Activated CD8-positive, alpha-beta T cell treated with anti-CD3 and anti-CD28 coated beads, Interleukin-2, amount 10 ng/mL, durations not matched to agents 7 days and 5 days (primary cell): ENCODE measurements at regions of chr2 and their contacts with region 1.

Region 1: GRCh38 chr2:97697252-97698235 is 15.8 kb upstream of the ZAP70 start:
- DNase-seq: peak; percentile 96
- ATAC-seq: peak; percentile 93
- H3K4me3 Mint-ChIP-seq: peak overlapping the region; percentile 10
- H3K27ac Mint-ChIP-seq: no peak overlapping the region
- H3K4me1 Mint-ChIP-seq: peaks cover 13% of the 10 kb centered on the region
- H3K27me3 Mint-ChIP-seq: peaks cover 2% of the 10 kb centered on the region

Region 2: GRCh38 chr2:97645695-97646629 is 51.6 kb before region 1 on chr2 and contains the start of gene COX5B:
- CTCF ChIA-PET with region 1: interaction called, 24 read pairs
- POLR2A ChIA-PET with region 1: interaction called, 17 read pairs
- DNase-seq: peak; percentile 99
- ATAC-seq: peak; percentile 98
- H3K4me3 Mint-ChIP-seq: peak within 1 kb of the TSS; percentile 89
- H3K27ac Mint-ChIP-seq: peak within 1 kb of the TSS; percentile 93
- H3K4me1 Mint-ChIP-seq: peaks cover 17% of the 10 kb centered on the region
- H3K27me3 Mint-ChIP-seq: peaks cover 2% of the 10 kb centered on the region
- total RNA-seq, gene COX5B: 215 to 216 TPM

Region 3: DNA sequence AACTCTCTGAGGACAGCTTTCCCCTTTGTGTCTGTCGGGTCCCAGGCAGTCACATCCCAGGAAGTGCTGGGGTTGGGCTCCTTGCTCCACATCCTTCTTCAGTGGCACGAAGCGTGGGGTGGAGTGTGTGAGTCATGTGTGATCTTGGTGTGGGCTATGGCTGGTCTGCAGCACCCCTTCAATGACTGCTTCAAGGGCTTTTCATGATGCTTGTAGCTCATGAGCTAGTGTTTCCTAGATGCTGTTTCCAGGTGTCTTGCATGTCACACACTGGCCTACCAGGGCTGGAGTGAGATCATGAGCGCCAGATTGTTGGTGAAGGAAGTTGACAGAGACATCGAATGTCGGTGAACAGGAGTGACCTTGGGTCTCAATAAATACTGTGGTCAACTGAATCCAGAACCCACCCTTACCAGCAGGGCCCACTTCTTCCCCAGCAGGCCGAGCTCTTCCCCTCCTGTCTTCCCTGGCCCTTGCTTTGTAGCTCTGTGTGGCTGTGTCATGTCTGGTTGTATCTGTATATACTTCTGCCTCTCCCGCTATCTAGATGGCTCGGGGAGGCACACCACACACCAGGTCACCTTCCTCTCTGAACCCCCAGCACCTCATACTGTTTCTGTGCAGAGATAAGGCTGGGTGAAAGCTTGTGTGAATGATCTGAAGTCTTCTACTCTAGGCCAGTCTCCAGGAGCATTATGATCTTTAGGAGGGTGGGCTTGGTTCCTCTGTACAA is 24.2 kb before region 1 on chr2:
- CTCF ChIA-PET with region 1: interaction called, 17 read pairs
- POLR2A ChIA-PET with region 1: no interaction called
- DNase-seq: peak; percentile 37
- ATAC-seq: peak; percentile 51
- H3K4me3 Mint-ChIP-seq: no peak overlapping the region
- H3K27ac Mint-ChIP-seq: peak overlapping the region; percentile 27
- H3K4me1 Mint-ChIP-seq: peaks cover 28% of the 10 kb centered on the region
- H3K27me3 Mint-ChIP-seq: peaks cover under 1% of the 10 kb centered on the region

Region 4: GRCh38 chr2:97740590-97741182 is 43.1 kb after region 1 on chr2:
- CTCF ChIA-PET with region 1: interaction called, 50 read pairs
- POLR2A ChIA-PET with region 1: no interaction called
- DNase-seq: peak; percentile 50
- ATAC-seq: no peak
- H3K4me3 Mint-ChIP-seq: no peak overlapping the region
- H3K27ac Mint-ChIP-seq: peak overlapping the region; percentile 78
- H3K4me1 Mint-ChIP-seq: peaks cover 63% of the 10 kb centered on the region
- H3K27me3 Mint-ChIP-seq: no peaks in the 10 kb centered on the region

Region 5: GRCh38 chr2:97763176-97763845 is 65.8 kb after region 1 on chr2:
- CTCF ChIA-PET with region 1: interaction called, 10 read pairs
- POLR2A ChIA-PET with region 1: no interaction called
- DNase-seq: no peak
- ATAC-seq: no peak
- H3K4me3 Mint-ChIP-seq: no peak overlapping the region
- H3K27ac Mint-ChIP-seq: peak overlapping the region; percentile 56
- H3K4me1 Mint-ChIP-seq: peaks cover 40% of the 10 kb centered on the region
- H3K27me3 Mint-ChIP-seq: no peaks in the 10 kb centered on the region

Region 6: GRCh38 chr2:97788986-97789644 is 91.6 kb after region 1 on chr2:
- CTCF ChIA-PET with region 1: no interaction called
- POLR2A ChIA-PET with region 1: no interaction called
- DNase-seq: no peak
- ATAC-seq: no peak
- H3K4me3 Mint-ChIP-seq: no peak overlapping the region
- H3K27ac Mint-ChIP-seq: no peak overlapping the region
- H3K4me1 Mint-ChIP-seq: peaks cover 8% of the 10 kb centered on the region
- H3K27me3 Mint-ChIP-seq: no peaks in the 10 kb centered on the region